Activated CD4-positive, alpha-beta T cell treated with anti-CD3 and anti-CD28 coated beads, Interleukin-2, amount 10 ng/mL, durations not matched to agents 24 days and 14 days (primary cell): ENCODE measurements at regions of chr2 and their contacts with region 1.

Region 1: GRCh38 chr2:25558262-25558661 is 115.1 kb downstream of the DTNB start:
- DNase-seq: peak; percentile 88
- H3K4me3 Mint-ChIP-seq: peak overlapping the region; percentile 39
- H3K27ac Mint-ChIP-seq: peak overlapping the region; percentile 96
- H3K4me1 Mint-ChIP-seq: peaks cover 60% of the 10 kb centered on the region
- H3K27me3 Mint-ChIP-seq: no peaks in the 10 kb centered on the region

Region 2: GRCh38 chr2:25228848-25229278 is 329.4 kb before region 1 on chr2:
- intact Hi-C with region 1: loop called (anchors 5 kb)
- DNase-seq: peak; percentile 67
- H3K4me3 Mint-ChIP-seq: no peak overlapping the region
- H3K27ac Mint-ChIP-seq: peak overlapping the region; percentile 24
- H3K4me1 Mint-ChIP-seq: peaks cover 5% of the 10 kb centered on the region
- H3K27me3 Mint-ChIP-seq: no peaks in the 10 kb centered on the region

Region 3: GRCh38 chr2:25376750-25377621 is 181.3 kb before region 1 on chr2:
- intact Hi-C with region 1: loop called (anchors 1 kb)
- DNase-seq: peak; percentile 98
- H3K4me3 Mint-ChIP-seq: peak overlapping the region; percentile 76
- H3K27ac Mint-ChIP-seq: peak overlapping the region; percentile 93
- H3K4me1 Mint-ChIP-seq: peaks cover 30% of the 10 kb centered on the region
- H3K27me3 Mint-ChIP-seq: no peaks in the 10 kb centered on the region

Region 4: DNA sequence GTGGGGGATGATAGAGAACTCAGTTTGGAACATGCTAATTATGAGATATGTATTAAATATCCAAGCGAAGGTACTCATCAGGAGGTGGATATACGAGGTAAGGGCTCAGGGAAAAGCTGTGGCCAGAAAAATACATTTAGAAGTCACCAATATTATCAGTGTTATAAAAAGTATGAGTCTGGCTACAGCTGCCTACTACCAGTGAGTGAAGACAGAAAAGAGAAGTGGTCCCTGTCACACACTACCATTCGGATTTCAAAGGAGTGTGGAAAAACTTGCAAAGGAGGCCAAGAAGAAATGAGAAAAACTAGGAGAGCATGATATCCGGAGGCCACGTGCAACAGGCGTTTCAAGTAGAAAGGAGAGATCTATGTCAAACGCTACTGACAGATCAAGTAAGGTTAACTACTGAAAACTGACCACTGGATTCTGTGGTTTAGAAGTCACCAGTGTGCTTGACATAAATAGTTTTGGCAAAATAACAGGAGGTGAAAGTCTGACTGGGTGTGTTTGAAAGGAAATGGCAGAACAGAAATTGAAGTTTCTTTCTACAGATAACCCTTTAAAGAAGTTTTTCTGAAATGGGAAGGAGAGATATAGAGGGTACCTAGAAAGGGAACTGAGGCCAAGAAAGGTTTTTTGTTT is 97.9 kb before region 1 on chr2:
- intact Hi-C with region 1: no loop called
- DNase-seq: no peak
- H3K4me3 Mint-ChIP-seq: no peak overlapping the region
- H3K27ac Mint-ChIP-seq: no peak overlapping the region
- H3K4me1 Mint-ChIP-seq: peaks cover 2% of the 10 kb centered on the region
- H3K27me3 Mint-ChIP-seq: no peaks in the 10 kb centered on the region

Region 5: GRCh38 chr2:25521665-25522387 is 36.4 kb before region 1 on chr2:
- intact Hi-C with region 1: loop called (anchors 1 kb)
- DNase-seq: peak; percentile 89
- H3K4me3 Mint-ChIP-seq: peak overlapping the region; percentile 18
- H3K27ac Mint-ChIP-seq: peak overlapping the region; percentile 45
- H3K4me1 Mint-ChIP-seq: peaks cover 19% of the 10 kb centered on the region
- H3K27me3 Mint-ChIP-seq: no peaks in the 10 kb centered on the region

Region 6: GRCh38 chr2:25570161-25570845 is 12.0 kb after region 1 on chr2:
- intact Hi-C with region 1: no loop called
- DNase-seq: peak; percentile 44
- H3K4me3 Mint-ChIP-seq: no peak overlapping the region
- H3K27ac Mint-ChIP-seq: no peak overlapping the region
- H3K4me1 Mint-ChIP-seq: peaks cover 10% of the 10 kb centered on the region
- H3K27me3 Mint-ChIP-seq: no peaks in the 10 kb centered on the region

Region 7: GRCh38 chr2:26025509-26025908 is 467.2 kb after region 1 on chr2:
- intact Hi-C with region 1: no loop called
- DNase-seq: no peak
- H3K4me3 Mint-ChIP-seq: no peak overlapping the region
- H3K27ac Mint-ChIP-seq: no peak overlapping the region
- H3K4me1 Mint-ChIP-seq: peaks cover 2% of the 10 kb centered on the region
- H3K27me3 Mint-ChIP-seq: no peaks in the 10 kb centered on the region

Region 8: DNA sequence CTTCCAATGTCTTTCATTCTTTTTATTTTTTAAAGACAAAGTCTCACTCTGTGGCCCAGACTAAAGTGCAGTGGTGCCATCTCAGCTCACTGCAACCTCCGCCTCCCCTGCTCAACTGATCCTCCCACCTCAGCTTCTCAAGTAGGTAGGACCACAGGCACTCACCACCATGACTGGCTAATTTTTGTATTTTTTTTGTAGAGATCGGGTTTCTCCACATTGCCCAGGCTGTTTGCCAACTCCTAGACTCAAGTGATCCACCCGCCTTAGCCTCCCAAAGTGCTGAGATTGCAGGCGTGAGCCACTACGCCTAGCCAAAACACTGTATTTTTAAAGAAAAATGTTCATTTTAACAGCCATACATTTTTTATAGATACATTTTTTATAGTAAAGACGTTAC is 1951.1 kb after region 1 on chr2:
- intact Hi-C with region 1: no loop called
- DNase-seq: no peak
- H3K4me3 Mint-ChIP-seq: no peak overlapping the region
- H3K27ac Mint-ChIP-seq: no peak overlapping the region
- H3K4me1 Mint-ChIP-seq: no peaks in the 10 kb centered on the region
- H3K27me3 Mint-ChIP-seq: peaks cover 12% of the 10 kb centered on the region